Ovary (tissue), 10 donors: ENCODE measurements at regions of chr1 and their contacts with region 1.

Region 1: GRCh38 chr1:69551476-69552324 is 16.0 kb upstream of the LRRC7 start:
- DNase-seq: no peak
- H3K4me3 ChIP-seq: no peak overlapping the region
- H3K27ac ChIP-seq: no peak overlapping the region
- H3K4me1 ChIP-seq: no peaks in the 10 kb centered on the region
- H3K27me3 ChIP-seq: no peaks in the 10 kb centered on the region
- CTCF ChIP-seq: no peak
- EP300 ChIP-seq: no peak
- POLR2A ChIP-seq: no peak

Region 2: GRCh38 chr1:67942274-67942673 is 1609.4 kb before region 1 on chr1:
- intact Hi-C with region 1: loop called in 1 of 4 experiments (anchors 5 kb)
- DNase-seq: no peak
- H3K4me3 ChIP-seq: no peak overlapping the region
- H3K27ac ChIP-seq: no peak overlapping the region
- H3K4me1 ChIP-seq: peaks cover 30% of the 10 kb centered on the region
- H3K27me3 ChIP-seq: no peaks in the 10 kb centered on the region
- CTCF ChIP-seq: no peak
- EP300 ChIP-seq: no peak
- POLR2A ChIP-seq: no peak

Region 3: DNA sequence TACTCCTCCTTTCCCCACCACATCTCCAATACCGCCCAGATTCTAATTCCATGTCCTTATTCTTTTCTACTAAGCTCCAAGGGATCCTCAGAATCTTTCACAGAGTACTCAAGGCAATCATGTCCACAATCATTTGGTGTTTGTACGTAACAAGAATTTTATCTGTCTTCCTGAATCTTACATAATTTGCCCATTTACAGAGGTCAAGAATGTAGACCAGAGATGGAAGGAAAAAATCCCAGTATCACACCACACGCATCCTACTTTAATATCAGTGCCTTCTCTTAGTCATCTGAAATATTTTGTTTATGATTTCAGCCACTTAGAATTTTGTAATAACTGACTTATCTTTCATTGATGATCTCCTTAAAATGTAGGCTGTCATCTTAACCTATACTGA is 350.0 kb before region 1 on chr1:
- intact Hi-C with region 1: no loop called
- DNase-seq: no peak
- H3K4me3 ChIP-seq: no peak overlapping the region
- H3K27ac ChIP-seq: no peak overlapping the region
- H3K4me1 ChIP-seq: no peaks in the 10 kb centered on the region
- H3K27me3 ChIP-seq: no peaks in the 10 kb centered on the region
- CTCF ChIP-seq: no peak
- EP300 ChIP-seq: no peak
- POLR2A ChIP-seq: no peak

Region 4: GRCh38 chr1:69475021-69475420 is 76.7 kb before region 1 on chr1:
- intact Hi-C with region 1: no loop called
- DNase-seq: no peak
- H3K4me3 ChIP-seq: no peak overlapping the region
- H3K27ac ChIP-seq: no peak overlapping the region
- H3K4me1 ChIP-seq: no peaks in the 10 kb centered on the region
- H3K27me3 ChIP-seq: no peaks in the 10 kb centered on the region
- CTCF ChIP-seq: no peak
- EP300 ChIP-seq: no peak
- POLR2A ChIP-seq: no peak